ENCODE measurements at regions of chr11 and their contacts with region 1.

Region 1: DNA sequence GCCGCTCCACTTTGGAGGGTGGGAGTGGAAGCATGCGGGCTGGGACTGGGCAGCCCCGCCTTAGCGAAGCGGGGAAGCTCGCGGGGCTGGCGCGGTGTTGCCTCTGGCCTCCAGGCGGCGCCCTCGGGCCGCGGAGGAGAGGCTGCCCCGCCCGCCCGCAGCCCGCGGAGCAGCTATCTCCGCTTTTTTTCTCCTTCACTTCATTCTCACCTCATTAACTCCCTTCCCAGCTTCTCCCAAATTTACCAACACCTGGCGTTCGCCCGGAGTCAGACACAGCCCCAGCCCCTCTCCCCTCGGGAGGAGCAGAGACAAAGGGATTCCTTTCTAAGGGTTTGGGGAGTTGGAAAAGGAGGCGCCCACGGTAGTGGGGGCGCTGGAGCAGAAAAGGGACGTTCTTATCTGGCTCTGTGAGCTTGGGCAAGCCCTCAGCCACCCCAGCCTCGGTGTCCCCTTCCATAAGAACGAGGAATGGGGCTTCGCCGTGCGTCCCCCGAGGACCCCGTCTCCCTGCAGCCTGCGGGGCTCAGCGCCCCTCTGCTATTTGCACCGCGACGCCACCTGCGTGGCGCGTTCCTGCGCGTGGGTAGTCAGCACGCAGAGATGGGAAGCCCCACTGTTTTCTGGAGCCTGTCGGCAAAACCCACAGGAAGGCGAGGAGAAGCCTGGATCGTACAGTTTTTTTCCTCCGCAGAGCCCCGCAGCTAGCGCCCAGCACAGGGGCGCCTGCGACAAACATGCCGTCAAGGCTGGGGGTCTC is 1.5 kb upstream of the WNT11 start:
- DNase-seq: no peak
- H3K4me3 ChIP-seq: peak overlapping the region; percentile 51
- CTCF ChIP-seq: peak; percentile 88

Region 2: DNA sequence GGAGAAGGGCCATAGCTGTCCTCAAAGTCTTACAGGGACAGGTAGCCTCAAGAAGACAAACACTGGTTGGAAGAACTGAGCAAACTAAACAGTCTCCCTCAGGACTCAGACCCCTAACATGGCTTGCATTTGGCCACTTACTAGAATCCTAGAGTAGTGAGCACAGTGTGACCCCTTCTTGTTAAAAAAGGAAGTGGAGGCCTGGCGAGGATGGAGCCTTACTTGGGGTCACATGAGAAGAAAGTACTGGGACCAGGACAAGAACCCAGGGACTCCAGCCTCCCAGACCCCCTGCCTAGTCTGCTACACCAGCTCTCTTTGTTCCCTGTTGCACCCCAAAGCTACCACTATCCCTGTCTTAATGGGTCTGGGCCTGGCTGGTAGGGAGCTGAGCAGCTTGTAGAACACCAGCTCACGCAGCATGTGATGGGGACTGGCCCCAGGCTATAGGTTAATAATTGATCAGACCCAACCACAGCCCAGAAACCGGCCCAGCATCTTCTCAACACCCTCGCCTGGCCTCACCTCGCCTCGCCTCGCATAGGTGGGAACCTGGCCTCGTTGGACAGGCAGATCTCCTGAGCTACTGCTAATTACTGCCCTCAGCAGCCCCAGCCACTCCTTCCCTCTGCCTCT is 421.6 kb before region 1 on chr11:
- CTCF ChIA-PET with region 1: no interaction called
- POLR2A ChIA-PET with region 1: no interaction called
- DNase-seq: no peak
- H3K4me3 ChIP-seq: no peak overlapping the region
- CTCF ChIP-seq: no peak

Region 3: DNA sequence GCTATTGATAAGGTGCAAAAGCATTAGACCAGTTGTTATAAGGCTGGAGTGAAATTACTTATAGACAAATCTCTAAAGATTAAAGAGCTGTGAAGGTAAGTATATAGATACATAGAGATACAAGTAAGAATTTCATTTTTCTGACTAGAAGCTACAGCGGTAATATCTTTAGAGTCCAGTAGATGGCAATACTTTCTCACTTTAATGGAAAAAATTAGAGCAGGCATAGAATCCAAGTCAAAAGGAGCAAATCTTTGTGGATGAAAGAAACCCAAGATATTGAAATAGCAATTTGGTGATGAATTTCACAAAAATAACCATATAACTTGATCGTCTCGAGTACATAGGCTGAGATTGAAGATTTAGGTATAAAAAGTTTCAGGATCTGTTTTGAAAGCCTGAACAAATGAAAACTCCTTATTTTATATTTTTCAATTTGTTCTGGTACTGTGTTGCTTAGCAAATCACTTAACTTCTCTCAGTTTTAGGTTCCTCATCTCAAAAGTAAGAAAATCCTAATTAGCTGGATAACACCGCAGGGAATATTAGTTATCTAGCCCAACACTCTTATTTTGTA is 310.9 kb before region 1 on chr11:
- CTCF ChIA-PET with region 1: interaction called, 127 read pairs
- POLR2A ChIA-PET with region 1: no interaction called
- DNase-seq: peak; percentile 16
- H3K4me3 ChIP-seq: no peak overlapping the region
- CTCF ChIP-seq: peak; percentile 31

Region 4: GRCh38 chr11:76225122-76225611 is 17.3 kb after region 1 on chr11:
- CTCF ChIA-PET with region 1: interaction called, 25 read pairs
- POLR2A ChIA-PET with region 1: no interaction called
- DNase-seq: no peak
- H3K4me3 ChIP-seq: no peak overlapping the region
- CTCF ChIP-seq: no peak

Region 5: DNA sequence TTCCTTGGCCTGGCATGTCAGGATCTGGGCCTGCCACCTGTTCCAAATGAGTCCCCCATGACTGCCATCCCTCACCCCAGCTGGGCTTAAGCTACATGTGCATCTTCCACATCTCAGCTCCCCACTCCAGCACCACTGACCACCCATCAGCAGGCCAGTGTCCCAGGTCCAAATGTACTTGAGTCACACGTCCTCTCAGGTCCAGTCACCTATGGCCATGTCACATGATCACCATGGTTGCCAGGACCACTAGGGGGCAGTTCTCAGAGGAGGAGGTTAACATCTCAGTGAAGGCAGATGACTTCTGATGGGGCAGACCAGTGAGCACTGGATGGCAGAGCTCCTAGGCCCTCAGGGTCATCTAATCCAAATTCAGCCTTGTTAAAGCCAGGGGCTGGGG is 40.4 kb after region 1 on chr11:
- CTCF ChIA-PET with region 1: interaction called, 15 read pairs
- POLR2A ChIA-PET with region 1: no interaction called
- DNase-seq: no peak
- H3K4me3 ChIP-seq: no peak overlapping the region
- CTCF ChIP-seq: no peak

Region 6: GRCh38 chr11:76307396-76307795 is 99.6 kb after region 1 on chr11:
- CTCF ChIA-PET with region 1: interaction called, 17 read pairs
- POLR2A ChIA-PET with region 1: no interaction called
- DNase-seq: no peak
- H3K4me3 ChIP-seq: no peak overlapping the region
- CTCF ChIP-seq: no peak

Region 7: GRCh38 chr11:76512851-76513653 is 305.2 kb after region 1 on chr11:
- CTCF ChIA-PET with region 1: interaction called, 57 read pairs
- POLR2A ChIA-PET with region 1: no interaction called
- DNase-seq: no peak
- H3K4me3 ChIP-seq: no peak overlapping the region
- CTCF ChIP-seq: peak; percentile 22

Region 8: GRCh38 chr11:76629853-76630599 is 422.2 kb after region 1 on chr11:
- CTCF ChIA-PET with region 1: no interaction called
- POLR2A ChIA-PET with region 1: no interaction called
- DNase-seq: no peak
- H3K4me3 ChIP-seq: no peak overlapping the region
- CTCF ChIP-seq: no peak